ENCODE measurements at regions of chr1 and their contacts with region 1.

Region 1: DNA sequence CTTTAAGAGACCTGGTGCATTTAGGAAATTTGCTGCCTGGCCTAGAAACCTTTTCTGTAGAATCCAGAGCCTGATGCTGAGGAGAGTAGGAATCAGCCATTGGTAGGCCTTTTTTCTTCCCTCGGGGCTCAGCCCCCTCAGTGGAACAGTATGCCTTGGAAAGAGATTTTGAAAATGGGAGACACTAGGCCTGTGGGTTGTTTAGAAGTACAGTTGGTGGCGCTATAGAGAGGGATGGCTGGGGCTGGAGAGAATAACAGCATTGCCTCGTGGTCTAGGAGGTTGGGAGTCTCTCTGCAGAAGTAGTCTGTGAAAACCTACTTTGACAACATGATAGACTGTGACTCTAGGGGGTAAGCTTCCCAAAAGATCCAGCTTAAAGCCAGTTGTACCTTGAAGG is 8.2 kb downstream of the KIF2C start:
- DNase-seq: no peak
- ATAC-seq: peak in 1 of 2 experiments; percentile 51; a peak in 2 of 6 replicates
- H3K4me3 ChIP-seq: no peak overlapping the region
- H3K27ac ChIP-seq: no peak overlapping the region
- H3K4me1 ChIP-seq: no peaks in the 10 kb centered on the region
- CTCF ChIP-seq: no peak
- EP300 ChIP-seq: no peak
- POLR2A ChIP-seq: no peak
- RAD21 ChIP-seq: no peak

Region 2: DNA sequence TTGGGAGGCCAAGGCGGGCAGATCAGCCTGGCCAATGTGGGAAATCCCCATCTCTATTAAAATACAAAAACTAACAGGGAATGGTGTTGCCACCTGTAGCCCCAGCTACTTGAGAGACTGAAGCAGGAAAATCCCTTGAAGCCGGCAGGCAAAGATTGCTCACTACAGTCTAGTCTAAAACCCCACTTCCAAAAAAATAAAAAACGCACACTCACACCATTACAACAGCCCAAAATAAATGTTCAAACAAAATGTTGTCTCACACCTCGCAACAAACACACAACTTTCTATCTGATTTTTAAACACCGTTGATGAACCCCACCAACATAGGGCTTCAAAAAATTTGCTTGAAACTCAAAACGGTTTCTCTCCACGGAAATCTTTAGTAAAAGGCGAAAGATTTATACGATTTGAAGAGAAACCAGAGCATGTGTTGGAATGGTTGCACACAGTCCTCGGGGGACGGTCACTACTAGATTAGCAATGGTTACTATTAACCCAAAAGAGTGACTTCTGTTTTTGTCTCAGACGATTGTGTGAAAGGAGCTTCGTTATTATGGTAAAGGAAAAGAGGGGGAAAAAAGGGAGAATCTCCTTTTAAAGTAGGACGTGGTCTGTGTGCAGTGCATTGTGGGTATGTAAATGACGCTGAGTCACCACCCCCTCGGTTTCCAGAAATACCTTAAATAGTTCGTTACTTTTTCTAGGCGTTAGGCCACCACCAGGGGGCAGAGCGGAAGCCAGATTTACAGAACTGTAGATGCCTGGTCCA is 17.0 kb before region 1 on chr1 and contains the start of gene RNU5D-1:
- CTCF ChIA-PET with region 1: interaction called, 18 read pairs
- POLR2A ChIA-PET with region 1: no interaction called
- DNase-seq: peak; percentile 72 to 94
- ATAC-seq: peak; percentile 90 to 93
- H3K4me3 ChIP-seq: peak within 1 kb of the TSS; percentile 35
- H3K27ac ChIP-seq: peak within 1 kb of the TSS; percentile 86 to 94
- H3K4me1 ChIP-seq: peaks cover 19% of the 10 kb centered on the region
- CTCF ChIP-seq: peak; percentile 68
- EP300 ChIP-seq: no peak
- POLR2A ChIP-seq: peak; percentile 81
- RAD21 ChIP-seq: no peak
- polyA plus RNA-seq, gene RNU5D-1: not detected in 2 replicates

Region 3: GRCh38 chr1:44934791-44935190 is 186.9 kb after region 1 on chr1:
- CTCF ChIA-PET with region 1: no interaction called
- POLR2A ChIA-PET with region 1: no interaction called
- DNase-seq: no peak
- ATAC-seq: no peak
- H3K4me3 ChIP-seq: no peak overlapping the region
- H3K27ac ChIP-seq: no peak overlapping the region
- H3K4me1 ChIP-seq: no peaks in the 10 kb centered on the region
- CTCF ChIP-seq: no peak
- EP300 ChIP-seq: no peak
- POLR2A ChIP-seq: no peak
- RAD21 ChIP-seq: no peak

Region 4: DNA sequence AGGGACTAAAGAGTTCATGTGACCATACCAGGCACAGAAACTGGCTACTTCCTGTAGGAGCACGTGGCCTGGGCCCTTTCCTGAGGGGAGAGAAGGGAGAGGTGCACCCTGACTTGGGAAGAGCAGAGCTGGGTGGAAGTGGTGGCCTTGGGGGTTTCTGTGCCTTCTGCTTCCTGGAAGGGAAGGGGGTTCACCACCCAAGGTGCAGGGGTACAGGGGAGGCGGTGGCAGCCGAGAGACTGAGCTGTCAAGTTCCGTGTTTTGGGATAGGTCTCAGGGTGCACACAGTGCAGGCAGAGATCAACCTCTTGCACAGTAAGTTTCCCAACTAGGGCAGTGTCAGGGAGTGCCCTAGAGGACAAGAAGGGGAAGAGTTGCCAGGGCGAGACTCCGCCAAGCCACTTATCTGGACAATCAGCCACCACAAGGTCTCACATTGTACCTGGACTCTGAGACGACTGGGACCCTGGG is 253.2 kb after region 1 on chr1:
- CTCF ChIA-PET with region 1: no interaction called
- POLR2A ChIA-PET with region 1: interaction called, 12 read pairs
- DNase-seq: no peak
- ATAC-seq: peak; percentile 60 to 70; a peak in 4 of 6 replicates
- H3K4me3 ChIP-seq: no peak overlapping the region
- H3K27ac ChIP-seq: no peak overlapping the region
- H3K4me1 ChIP-seq: no peaks in the 10 kb centered on the region
- CTCF ChIP-seq: no peak
- EP300 ChIP-seq: no peak
- POLR2A ChIP-seq: no peak
- RAD21 ChIP-seq: no peak